ENCODE measurements at regions of chr2 and their contacts with region 1.

Region 1: GRCh38 chr2:162058973-162059668 is 14.9 kb downstream of the DPP4 start:
- DNase-seq: no peak
- H3K4me3 Mint-ChIP-seq: peak overlapping the region; percentile 52
- H3K27ac Mint-ChIP-seq: peak overlapping the region; percentile 87
- H3K4me1 Mint-ChIP-seq: peaks cover 87% of the 10 kb centered on the region
- H3K27me3 Mint-ChIP-seq: no peaks in the 10 kb centered on the region

Region 2: GRCh38 chr2:161965994-161966393 is 93.1 kb before region 1 on chr2:
- intact Hi-C with region 1: loop called (anchors 1 kb)
- DNase-seq: no peak
- H3K4me3 Mint-ChIP-seq: no peak overlapping the region
- H3K27ac Mint-ChIP-seq: no peak overlapping the region
- H3K4me1 Mint-ChIP-seq: peaks cover 51% of the 10 kb centered on the region
- H3K27me3 Mint-ChIP-seq: no peaks in the 10 kb centered on the region

Region 3: DNA sequence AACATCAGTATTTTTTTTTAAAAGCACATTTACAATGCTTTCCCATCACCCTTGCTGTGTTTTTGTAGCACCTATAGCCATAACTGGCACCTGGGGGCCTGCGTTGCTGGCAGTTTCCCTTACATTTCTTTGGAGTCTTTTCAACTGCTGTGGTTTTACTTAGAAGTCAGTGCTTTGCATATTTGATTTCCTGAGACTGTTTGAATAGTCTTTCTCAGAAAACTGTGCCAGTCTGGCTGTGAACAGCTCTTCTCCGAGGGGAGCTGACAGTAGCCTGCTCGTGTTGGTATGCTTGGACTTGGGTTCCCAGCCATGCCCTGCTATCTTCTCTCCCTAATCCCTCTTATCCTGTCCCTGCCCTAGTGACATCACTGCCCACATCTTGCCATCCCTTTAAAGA is 66.6 kb before region 1 on chr2:
- intact Hi-C with region 1: loop called (anchors 2 kb)
- DNase-seq: peak; percentile 61
- H3K4me3 Mint-ChIP-seq: peak overlapping the region; percentile 76
- H3K27ac Mint-ChIP-seq: peak overlapping the region; percentile 95
- H3K4me1 Mint-ChIP-seq: peaks cover 68% of the 10 kb centered on the region
- H3K27me3 Mint-ChIP-seq: no peaks in the 10 kb centered on the region

Region 4: GRCh38 chr2:162013514-162014475 is 45.3 kb before region 1 on chr2:
- intact Hi-C with region 1: loop called (anchors 2 kb)
- DNase-seq: no peak
- H3K4me3 Mint-ChIP-seq: peak overlapping the region; percentile 79
- H3K27ac Mint-ChIP-seq: peak overlapping the region; percentile 87
- H3K4me1 Mint-ChIP-seq: peaks cover 67% of the 10 kb centered on the region
- H3K27me3 Mint-ChIP-seq: no peaks in the 10 kb centered on the region

Region 5: DNA sequence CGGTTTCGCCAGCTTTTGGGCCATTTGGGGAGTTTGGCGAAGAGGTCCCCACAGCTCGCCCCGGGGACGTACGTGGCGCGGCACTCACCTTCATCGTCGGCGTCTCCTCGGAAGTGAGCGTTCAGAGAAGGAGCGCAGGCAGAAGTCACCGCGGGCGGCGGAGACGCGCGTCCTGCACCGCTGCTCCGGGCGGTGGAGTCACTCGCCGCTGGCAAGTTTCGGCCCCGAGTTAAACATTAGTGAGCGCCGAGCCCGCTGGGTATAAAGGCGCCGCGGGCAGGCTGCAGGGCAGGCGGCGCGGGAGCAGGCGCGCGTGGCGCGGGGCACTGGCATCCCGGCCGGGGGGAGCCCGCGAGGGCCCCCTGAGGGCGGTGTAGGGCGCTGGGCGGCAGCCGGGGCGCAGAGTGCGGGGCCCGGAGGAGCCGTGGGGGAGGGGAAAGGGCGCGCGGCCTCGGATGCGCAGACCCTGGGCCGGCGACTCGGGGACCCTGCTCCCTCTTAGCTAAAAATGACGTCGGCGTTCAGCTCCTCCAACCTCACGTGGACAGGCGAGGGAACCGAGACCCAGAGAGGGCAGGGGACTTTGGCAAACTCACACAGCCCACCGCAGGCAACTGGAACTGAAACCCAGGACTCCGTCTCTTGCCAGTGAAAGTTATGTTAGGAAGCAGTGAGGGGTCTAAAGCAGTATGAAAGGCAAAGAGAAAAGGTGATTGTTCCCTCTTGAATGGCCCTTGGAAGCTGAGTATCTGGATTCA is 14.9 kb after region 1 on chr2 and contains the start of gene DPP4:
- intact Hi-C with region 1: loop called (anchors 1 kb)
- DNase-seq: peak; percentile 46
- H3K4me3 Mint-ChIP-seq: peak within 1 kb of the TSS; percentile 87
- H3K27ac Mint-ChIP-seq: peak within 1 kb of the TSS; percentile 74
- H3K4me1 Mint-ChIP-seq: peaks cover 48% of the 10 kb centered on the region
- H3K27me3 Mint-ChIP-seq: no peaks in the 10 kb centered on the region
- total RNA-seq, gene DPP4: 65.8 and 67.0 TPM in 2 replicates

Region 6: GRCh38 chr2:162318328-162319180 is 259.4 kb after region 1 on chr2 and contains the start of gene IFIH1:
- intact Hi-C with region 1: loop called (anchors 5 kb)
- DNase-seq: peak; percentile 76
- H3K4me3 Mint-ChIP-seq: peak within 1 kb of the TSS; percentile 91
- H3K27ac Mint-ChIP-seq: peak within 1 kb of the TSS; percentile 96
- H3K4me1 Mint-ChIP-seq: peaks cover 51% of the 10 kb centered on the region
- H3K27me3 Mint-ChIP-seq: no peaks in the 10 kb centered on the region
- total RNA-seq, gene IFIH1: 14.5 and 16.1 TPM in 2 replicates